ENCODE measurements at regions of chr7 and their contacts with region 1.

Region 1: GRCh38 chr7:10889266-10889898 is 84.3 kb upstream of the PHF14 start:
- DNase-seq: no peak
- ATAC-seq: peak; percentile 66
- H3K4me3 Mint-ChIP-seq: peak overlapping the region; percentile 54
- H3K27ac Mint-ChIP-seq: peak overlapping the region; percentile 20
- H3K4me1 Mint-ChIP-seq: peaks cover 9% of the 10 kb centered on the region
- H3K27me3 Mint-ChIP-seq: peaks cover 3% of the 10 kb centered on the region
- CTCF ChIP-seq: no peak

Region 2: DNA sequence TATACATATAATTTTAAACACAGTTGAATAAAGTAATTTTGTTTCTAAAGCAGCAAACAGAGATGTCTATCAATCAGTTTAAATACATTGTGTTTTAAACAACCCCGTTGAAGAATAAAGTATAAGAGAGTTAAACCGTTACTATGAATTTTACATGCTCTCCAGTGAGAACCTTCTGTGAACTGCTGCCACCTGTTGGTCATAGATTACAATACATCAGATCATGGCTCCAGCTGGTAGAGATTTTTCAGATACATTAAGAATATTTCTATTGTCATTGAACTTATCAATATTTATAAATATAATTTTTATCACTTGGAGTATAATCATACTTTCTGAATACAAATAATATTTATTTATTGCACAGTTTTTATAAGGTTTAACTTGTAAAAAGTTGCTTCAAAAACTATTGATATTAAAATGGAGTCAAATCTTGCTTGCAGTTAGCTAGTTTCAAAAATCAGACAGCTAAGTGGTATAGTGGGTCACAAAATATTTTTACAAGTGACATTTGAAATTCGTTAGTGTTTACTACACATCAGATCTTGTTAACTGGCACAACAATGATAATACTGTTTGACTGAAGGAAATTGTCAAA is 476.9 kb before region 1 on chr7:
- CTCF ChIA-PET with region 1: interaction called, 3 read pairs
- POLR2A ChIA-PET with region 1: no interaction called
- intact Hi-C with region 1: loop called (anchors 2 kb)
- DNase-seq: no peak
- ATAC-seq: no peak
- H3K4me3 Mint-ChIP-seq: no peak overlapping the region
- H3K27ac Mint-ChIP-seq: no peak overlapping the region
- H3K4me1 Mint-ChIP-seq: no peaks in the 10 kb centered on the region
- H3K27me3 Mint-ChIP-seq: no peaks in the 10 kb centered on the region
- CTCF ChIP-seq: peak; percentile 16

Region 3: DNA sequence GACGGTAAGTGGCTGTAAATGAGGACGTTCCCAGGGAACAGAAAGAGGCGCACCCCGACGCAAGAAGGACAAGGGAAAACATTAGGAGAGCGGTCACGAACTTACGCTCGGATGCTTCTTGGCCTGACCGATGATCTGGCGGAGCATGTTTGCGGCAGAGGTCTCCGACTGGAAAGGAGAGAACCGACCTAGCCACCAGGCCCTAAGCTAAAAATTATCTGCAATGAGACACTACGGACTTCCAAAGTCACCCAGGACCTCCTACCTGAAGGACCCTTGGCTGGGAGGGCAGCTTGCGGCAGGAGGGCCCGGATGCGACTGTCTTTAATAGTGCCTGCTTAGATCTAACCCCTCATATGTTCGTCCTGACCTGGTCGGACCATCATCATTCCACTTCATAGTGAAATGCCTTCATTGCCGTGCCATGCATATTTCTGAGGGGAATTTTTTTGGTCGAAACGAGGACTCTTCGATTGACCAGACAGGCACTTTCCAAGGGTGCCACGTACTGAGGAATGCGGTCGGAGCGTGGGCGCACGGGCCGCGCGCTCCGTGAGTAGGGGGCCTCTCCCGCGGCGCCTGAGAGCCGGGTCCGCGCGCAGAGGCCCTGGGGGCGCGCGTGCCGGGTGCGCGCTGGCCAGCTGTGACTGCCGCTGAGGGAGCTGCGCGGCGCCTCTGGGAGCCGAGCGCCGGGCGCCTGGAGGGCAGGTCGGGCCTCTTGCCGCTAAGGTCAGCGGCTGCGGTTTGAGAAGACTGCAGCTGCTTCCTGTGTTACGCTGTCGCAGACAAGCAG is 50.7 kb after region 1 on chr7:
- CTCF ChIA-PET with region 1: no interaction called
- POLR2A ChIA-PET with region 1: no interaction called
- intact Hi-C with region 1: no loop called
- DNase-seq: peak; percentile 93
- ATAC-seq: peak; percentile 91
- H3K4me3 Mint-ChIP-seq: no peak overlapping the region
- H3K27ac Mint-ChIP-seq: no peak overlapping the region
- H3K4me1 Mint-ChIP-seq: peaks cover 5% of the 10 kb centered on the region
- H3K27me3 Mint-ChIP-seq: no peaks in the 10 kb centered on the region
- CTCF ChIP-seq: no peak

Region 4: DNA sequence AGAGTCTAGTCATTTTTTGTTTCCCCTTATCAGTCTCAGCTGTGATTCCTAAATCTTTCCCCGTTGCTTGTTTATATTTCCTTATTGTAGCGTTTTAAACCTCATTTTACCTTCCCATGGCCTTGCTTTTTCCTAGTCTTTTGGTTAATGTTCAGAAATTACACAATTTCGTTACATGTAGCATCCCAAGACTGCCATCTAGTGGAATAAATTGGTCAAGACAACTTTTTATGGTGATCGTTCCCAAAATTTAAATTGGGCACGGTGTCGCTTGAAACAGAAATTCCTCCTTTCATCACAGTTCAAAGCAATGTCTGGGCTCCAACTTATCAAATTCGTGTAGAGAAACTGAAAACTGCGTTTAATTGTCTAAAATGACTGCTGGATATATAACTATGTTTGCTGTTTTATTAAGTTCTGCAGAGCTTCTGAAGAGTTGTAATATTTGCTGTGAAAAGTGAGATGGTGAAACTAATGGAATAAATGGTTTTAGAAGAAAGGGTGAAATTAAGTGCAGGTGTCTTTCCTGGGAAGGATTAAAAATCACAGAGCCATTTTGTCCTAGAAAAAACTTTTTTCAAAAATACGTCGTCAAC is 454.5 kb after region 1 on chr7:
- CTCF ChIA-PET with region 1: no interaction called
- POLR2A ChIA-PET with region 1: no interaction called
- intact Hi-C with region 1: loop called (anchors 10 kb)
- DNase-seq: no peak
- ATAC-seq: no peak
- H3K4me3 Mint-ChIP-seq: no peak overlapping the region
- H3K27ac Mint-ChIP-seq: no peak overlapping the region
- H3K4me1 Mint-ChIP-seq: no peaks in the 10 kb centered on the region
- H3K27me3 Mint-ChIP-seq: peaks cover 3% of the 10 kb centered on the region
- CTCF ChIP-seq: peak; percentile 86

Measured in activated B cell treated with CpG ODN at 0.5 μM for 24 hours (primary cell).